Endothelial cell of umbilical vein (primary cell): ENCODE measurements at regions of chr11 and their contacts with region 1.

Region 1: GRCh38 chr11:69122642-69123431 is 32.9 kb upstream of the SMIM38 start:
- DNase-seq: peak; percentile 64
- H3K4me3 ChIP-seq: no peak overlapping the region
- H3K27ac ChIP-seq: no peak overlapping the region
- H3K4me1 ChIP-seq: peaks cover 18% of the 10 kb centered on the region
- H3K27me3 ChIP-seq: no peaks in the 10 kb centered on the region
- CTCF ChIP-seq: no peak
- POLR2A ChIP-seq: no peak

Region 2: GRCh38 chr11:69260622-69261021 is 137.8 kb after region 1 on chr11:
- CTCF ChIA-PET with region 1: no interaction called
- POLR2A ChIA-PET with region 1: no interaction called
- dilution Hi-C with region 1: no loop called
- intact Hi-C with region 1: loop called (anchors 10 kb)
- DNase-seq: no peak
- H3K4me3 ChIP-seq: no peak overlapping the region
- H3K27ac ChIP-seq: no peak overlapping the region
- H3K4me1 ChIP-seq: no peaks in the 10 kb centered on the region
- H3K27me3 ChIP-seq: peaks cover 4% of the 10 kb centered on the region in 2 experiments
- CTCF ChIP-seq: no peak
- POLR2A ChIP-seq: no peak